ENCODE measurements at regions of chr16 and their contacts with region 1.

Region 1: DNA sequence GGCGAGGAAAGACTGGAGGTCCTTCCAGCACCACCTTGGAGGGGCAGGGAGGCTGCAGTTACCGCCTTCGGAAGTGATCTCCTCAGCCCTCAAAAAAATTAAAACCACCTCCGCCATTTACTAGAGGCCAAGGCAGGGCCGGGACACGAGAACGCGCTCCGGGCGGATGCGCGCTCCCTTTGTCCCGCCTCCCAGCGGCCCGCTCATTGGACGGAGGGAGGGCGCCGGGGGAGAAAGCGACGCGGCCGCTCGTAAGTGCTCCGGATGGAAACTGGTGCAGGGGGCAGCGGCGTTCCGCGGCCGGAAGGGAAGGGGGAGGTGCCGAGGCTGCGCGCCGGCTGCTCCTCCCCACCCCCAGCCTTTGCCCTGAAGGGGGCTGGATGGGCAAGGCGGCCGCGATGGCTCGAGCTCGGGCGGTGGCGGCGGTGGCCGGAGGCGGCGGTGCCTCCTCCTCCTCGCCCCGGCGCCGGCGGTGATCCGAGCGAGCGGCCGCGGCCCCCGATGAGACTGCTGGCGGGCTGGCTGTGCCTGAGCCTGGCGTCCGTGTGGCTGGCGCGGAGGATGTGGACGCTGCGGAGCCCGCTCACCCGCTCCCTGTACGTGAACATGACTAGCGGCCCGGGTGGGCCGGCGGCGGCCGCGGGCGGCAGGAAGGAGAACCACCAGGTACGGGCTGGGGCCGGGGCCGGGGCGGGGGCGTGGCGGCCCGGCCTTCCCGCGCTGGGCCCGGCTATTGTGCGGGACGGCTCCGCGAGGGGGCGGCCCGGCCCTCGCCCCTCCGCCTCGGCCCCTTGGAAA is at the start of gene METTL9:
- DNase-seq: peak; percentile 90 to 96 (median 94)
- H3K4me3 ChIP-seq: peak within 1 kb of the TSS; percentile 81
- H3K27ac ChIP-seq: peak within 1 kb of the TSS; percentile 82 to 91
- H3K4me1 ChIP-seq: peaks cover 5% of the 10 kb centered on the region
- H3K27me3 ChIP-seq: no peaks in the 10 kb centered on the region
- CTCF ChIP-seq: peak in 1 of 3 donors; percentile 29
- EP300 ChIP-seq: no peak
- POLR2A ChIP-seq: peak; percentile 56
- total RNA-seq, gene METTL9: 69.3 to 160 (median 87.0) TPM

Region 2: GRCh38 chr16:21656795-21657768 is 57.6 kb after region 1 on chr16:
- intact Hi-C with region 1: loop called in 1 of 4 experiments (anchors 10 kb)
- DNase-seq: peak in 1 of 5 donors; percentile 27
- H3K4me3 ChIP-seq: no peak overlapping the region
- H3K27ac ChIP-seq: no peak overlapping the region
- H3K4me1 ChIP-seq: no peaks in the 10 kb centered on the region
- H3K27me3 ChIP-seq: no peaks in the 10 kb centered on the region
- CTCF ChIP-seq: peak in 1 of 3 donors; percentile 59
- EP300 ChIP-seq: no peak
- POLR2A ChIP-seq: no peak

Region 3: GRCh38 chr16:21727344-21727743 is 127.9 kb after region 1 on chr16:
- intact Hi-C with region 1: no loop called
- DNase-seq: no peak
- H3K4me3 ChIP-seq: no peak overlapping the region
- H3K27ac ChIP-seq: no peak overlapping the region
- H3K4me1 ChIP-seq: no peaks in the 10 kb centered on the region
- H3K27me3 ChIP-seq: no peaks in the 10 kb centered on the region
- CTCF ChIP-seq: no peak
- EP300 ChIP-seq: no peak
- POLR2A ChIP-seq: no peak